Activated T-helper 1 cell treated with anti-CD3 and anti-CD28 coated beads, Interleukin-12 subunit alpha, Interleukin-12 subunit beta, Interleukin-2, Interleukin-4 antibody, amounts not matched to agents 30 ng/mL and 10 ng/mL and 1 ng/mL, durations not matched to agents 14 hours and 24 hours and 36 hours (primary cell): ENCODE measurements at regions of chr4 and their contacts with region 1.

Region 1: DNA sequence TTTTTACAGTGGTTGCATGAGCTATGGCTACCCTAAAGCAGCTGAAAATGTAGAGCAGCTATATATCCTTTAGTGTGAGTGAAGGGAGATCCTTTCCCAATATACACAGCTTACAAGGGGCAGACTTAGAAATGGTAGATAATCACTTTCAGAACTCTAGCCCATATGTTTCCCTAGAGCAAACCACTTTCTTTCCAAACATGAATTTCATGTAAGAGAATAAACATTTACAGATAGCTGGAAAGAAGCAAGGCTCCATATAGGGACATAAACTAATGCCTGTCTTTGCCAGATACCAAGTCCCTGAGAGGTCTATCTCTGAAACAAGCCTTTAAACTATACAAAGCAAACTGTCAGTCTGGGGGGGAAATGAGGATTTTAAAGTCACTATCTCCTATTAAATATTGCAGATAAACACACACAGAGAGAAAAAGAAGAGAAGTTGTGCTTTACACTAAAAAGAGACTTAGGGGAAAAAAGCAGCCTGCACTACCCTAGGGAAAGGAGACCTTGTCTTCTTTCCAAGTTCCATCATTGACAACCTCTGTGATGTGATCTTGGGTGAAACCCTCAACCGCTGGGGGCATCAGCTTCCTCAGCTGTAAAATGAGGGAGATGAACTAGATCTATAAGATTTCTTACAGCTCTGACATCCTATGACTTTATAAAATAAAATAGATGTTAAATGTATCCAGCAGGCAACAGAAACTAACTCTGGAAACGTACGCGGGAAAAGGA is 73.6 kb downstream of the TMEM156 start:
- DNase-seq: no peak
- H3K4me3 Mint-ChIP-seq: peak overlapping the region; percentile 46
- H3K27ac Mint-ChIP-seq: peak overlapping the region; percentile 96
- H3K4me1 Mint-ChIP-seq: peaks cover 62% of the 10 kb centered on the region
- H3K27me3 Mint-ChIP-seq: no peaks in the 10 kb centered on the region

Region 2: GRCh38 chr4:38804654-38805295 is 153.8 kb before region 1 on chr4 and contains the start of gene TLR1:
- intact Hi-C with region 1: no loop called
- DNase-seq: no peak
- H3K4me3 Mint-ChIP-seq: peak within 1 kb of the TSS; percentile 81
- H3K27ac Mint-ChIP-seq: peak within 1 kb of the TSS; percentile 87
- H3K4me1 Mint-ChIP-seq: peaks cover 38% of the 10 kb centered on the region
- H3K27me3 Mint-ChIP-seq: no peaks in the 10 kb centered on the region
- total RNA-seq, gene TLR1: 1.9 and 2.7 TPM in 2 replicates

Region 3: GRCh38 chr4:38856524-38857337 is 101.9 kb before region 1 on chr4 and contains the start of gene TLR6:
- intact Hi-C with region 1: no loop called
- DNase-seq: peak; percentile 65
- H3K4me3 Mint-ChIP-seq: peak within 1 kb of the TSS; percentile 88
- H3K27ac Mint-ChIP-seq: peak within 1 kb of the TSS; percentile 88
- H3K4me1 Mint-ChIP-seq: peaks cover 50% of the 10 kb centered on the region
- H3K27me3 Mint-ChIP-seq: no peaks in the 10 kb centered on the region
- total RNA-seq, gene TLR6: 1.3 and 1.7 TPM in 2 replicates

Region 4: DNA sequence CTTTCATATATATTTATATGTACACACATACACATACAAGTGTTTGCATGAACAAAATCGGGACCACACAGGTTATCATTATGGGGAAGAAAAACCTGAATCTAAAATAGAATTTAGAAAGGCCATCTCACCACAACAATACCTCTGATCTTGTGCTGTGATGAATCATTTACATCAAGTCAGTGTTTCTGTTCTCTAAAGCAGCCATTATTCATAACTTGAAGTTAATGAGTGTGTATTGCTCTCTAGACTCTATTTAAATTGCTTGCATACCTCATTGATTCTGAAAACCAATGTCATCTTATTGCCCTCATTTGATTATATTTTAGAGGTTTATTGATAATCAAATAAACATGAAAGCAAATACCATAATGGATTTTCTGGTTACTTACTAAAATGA is 19.5 kb before region 1 on chr4:
- intact Hi-C with region 1: loop called (anchors 1 kb)
- DNase-seq: no peak
- H3K4me3 Mint-ChIP-seq: no peak overlapping the region
- H3K27ac Mint-ChIP-seq: peak overlapping the region; percentile 49
- H3K4me1 Mint-ChIP-seq: peaks cover 43% of the 10 kb centered on the region
- H3K27me3 Mint-ChIP-seq: no peaks in the 10 kb centered on the region

Region 5: DNA sequence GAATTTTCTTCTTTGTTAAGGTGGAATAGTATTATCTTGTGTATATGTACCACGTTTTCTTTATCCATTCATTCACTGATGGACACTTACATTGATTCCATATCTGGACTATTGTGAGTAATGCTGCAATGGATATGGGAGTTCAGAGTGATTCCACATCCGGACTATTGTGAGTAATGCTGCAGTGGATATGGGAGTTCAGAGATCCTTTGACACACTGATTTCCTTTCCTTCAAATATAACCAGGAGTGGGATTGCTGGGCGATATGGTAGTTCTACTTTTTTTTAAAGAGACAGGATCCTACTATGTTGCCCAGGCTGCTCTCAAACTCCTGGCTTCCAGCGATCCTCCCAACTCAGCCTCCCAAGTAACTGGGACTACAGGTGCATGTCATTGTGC is 61.5 kb after region 1 on chr4:
- intact Hi-C with region 1: no loop called
- DNase-seq: no peak
- H3K4me3 Mint-ChIP-seq: no peak overlapping the region
- H3K27ac Mint-ChIP-seq: no peak overlapping the region
- H3K4me1 Mint-ChIP-seq: peaks cover 32% of the 10 kb centered on the region
- H3K27me3 Mint-ChIP-seq: no peaks in the 10 kb centered on the region

Region 6: DNA sequence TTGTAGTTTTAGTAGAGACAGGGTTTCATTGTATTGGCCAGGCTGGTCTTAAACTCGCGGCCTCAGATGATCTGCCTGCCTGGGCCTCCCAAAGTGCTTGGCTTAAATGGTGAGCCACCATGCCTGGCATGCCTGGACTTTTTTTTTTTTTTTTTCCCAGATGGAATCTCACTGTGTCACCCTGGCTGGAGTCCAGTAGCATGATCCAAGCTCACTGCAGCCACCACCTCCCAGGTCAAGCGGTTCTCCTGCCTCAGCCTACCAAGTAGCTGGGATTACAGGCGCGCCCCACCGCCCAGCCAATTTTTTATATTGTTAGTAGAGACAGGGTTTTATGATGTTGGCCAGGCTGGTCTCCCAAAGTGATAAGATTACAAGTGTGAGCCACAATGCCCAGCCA is 747.7 kb after region 1 on chr4:
- intact Hi-C with region 1: no loop called
- DNase-seq: no peak
- H3K4me3 Mint-ChIP-seq: no peak overlapping the region
- H3K27ac Mint-ChIP-seq: peak overlapping the region; percentile 51
- H3K4me1 Mint-ChIP-seq: peaks cover 23% of the 10 kb centered on the region
- H3K27me3 Mint-ChIP-seq: no peaks in the 10 kb centered on the region